IMR-90 (cell line): ENCODE measurements at regions of chr6 and their contacts with region 1.

Region 1: DNA sequence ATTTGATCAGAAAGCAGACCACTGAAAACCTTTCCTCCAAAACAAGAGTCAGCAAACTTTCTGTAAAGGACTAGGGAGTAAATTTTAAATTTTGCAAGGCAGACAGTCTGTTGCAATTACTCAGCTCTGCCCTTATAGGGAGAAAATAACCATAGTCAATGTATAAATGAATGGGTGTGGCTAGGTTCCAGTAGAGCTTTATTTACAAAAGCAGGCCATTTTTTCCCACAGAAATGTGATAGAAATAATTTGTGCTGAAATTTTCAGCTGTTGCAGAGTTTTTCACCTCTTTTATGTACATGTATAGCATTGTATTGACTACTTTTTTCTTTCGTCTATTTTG is 7.7 kb downstream of the AMD1 start:
- DNase-seq: peak; percentile 44
- ATAC-seq: 0 out of 2 replicates have a peak, but pooled peaks have one; percentile 27
- H3K4me3 ChIP-seq: no peak overlapping the region
- H3K27ac ChIP-seq: peak overlapping the region; percentile 79; the same call in 1 of the 2 replicates
- H3K4me1 ChIP-seq: peaks cover 18% of the 10 kb centered on the region
- H3K27me3 ChIP-seq: no peaks in the 10 kb centered on the region
- CTCF ChIP-seq: no peak
- POLR2A ChIP-seq: no peak
- RAD21 ChIP-seq: no peak

Region 2: DNA sequence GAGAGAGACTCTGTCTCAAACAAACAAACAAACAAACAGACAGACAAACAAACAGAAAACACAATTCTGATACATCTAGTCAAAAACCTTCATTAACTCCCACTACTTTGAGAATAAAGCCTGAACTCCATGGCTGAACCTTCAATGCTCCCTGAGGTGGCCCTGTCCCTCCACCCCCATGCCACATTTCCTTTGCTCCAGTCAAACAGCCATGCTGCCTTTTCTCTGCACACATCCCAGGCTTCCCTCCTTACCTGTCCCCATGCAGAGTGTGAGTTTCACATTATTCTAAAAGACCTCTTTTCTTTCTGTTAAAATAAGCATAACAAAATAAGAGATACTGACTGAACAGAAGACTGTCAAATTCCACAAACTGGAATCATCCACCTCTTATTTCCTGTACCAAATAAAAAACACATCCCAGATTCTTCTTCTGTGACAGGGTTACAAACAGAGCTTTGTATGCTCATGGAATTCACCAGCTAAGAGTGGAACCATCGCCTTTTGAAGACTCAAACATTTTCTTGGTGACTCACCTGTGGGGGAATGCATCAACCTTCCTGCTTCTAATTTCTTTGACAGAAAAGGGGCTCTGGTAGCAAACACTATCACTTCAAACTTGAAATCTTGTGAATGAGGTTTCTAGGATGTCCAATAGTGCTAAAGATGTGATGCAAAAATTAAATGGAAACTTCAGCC is 334.8 kb before region 1 on chr6:
- CTCF ChIA-PET with region 1: no interaction called
- POLR2A ChIA-PET with region 1: no interaction called
- dilution Hi-C with region 1: no loop called
- in situ Hi-C with region 1: no loop called
- intact Hi-C with region 1: no loop called
- DNase-seq: peak; percentile 70
- ATAC-seq: peak; percentile 80
- H3K4me3 ChIP-seq: no peak overlapping the region
- H3K27ac ChIP-seq: peak overlapping the region; percentile 20; the same call in 1 of the 2 replicates
- H3K4me1 ChIP-seq: peaks cover 8% of the 10 kb centered on the region
- H3K27me3 ChIP-seq: no peaks in the 10 kb centered on the region
- CTCF ChIP-seq: no peak
- POLR2A ChIP-seq: no peak
- RAD21 ChIP-seq: no peak

Region 3: GRCh38 chr6:110949679-110950285 is 67.5 kb after region 1 on chr6:
- CTCF ChIA-PET with region 1: interaction called, 9 read pairs
- POLR2A ChIA-PET with region 1: interaction called, 3 read pairs
- dilution Hi-C with region 1: no loop called
- in situ Hi-C with region 1: loop called (anchors 5 kb)
- intact Hi-C with region 1: loop called (anchors 2 kb)
- DNase-seq: peak; percentile 54
- ATAC-seq: no peak
- H3K4me3 ChIP-seq: no peak overlapping the region
- H3K27ac ChIP-seq: no peak overlapping the region
- H3K4me1 ChIP-seq: peaks cover 15% of the 10 kb centered on the region
- H3K27me3 ChIP-seq: no peaks in the 10 kb centered on the region
- CTCF ChIP-seq: peak; percentile 66
- POLR2A ChIP-seq: no peak
- RAD21 ChIP-seq: peak; percentile 53